Mammary epithelial cell (primary cell): ENCODE measurements at regions of chr6 and their contacts with region 1.

Region 1: DNA sequence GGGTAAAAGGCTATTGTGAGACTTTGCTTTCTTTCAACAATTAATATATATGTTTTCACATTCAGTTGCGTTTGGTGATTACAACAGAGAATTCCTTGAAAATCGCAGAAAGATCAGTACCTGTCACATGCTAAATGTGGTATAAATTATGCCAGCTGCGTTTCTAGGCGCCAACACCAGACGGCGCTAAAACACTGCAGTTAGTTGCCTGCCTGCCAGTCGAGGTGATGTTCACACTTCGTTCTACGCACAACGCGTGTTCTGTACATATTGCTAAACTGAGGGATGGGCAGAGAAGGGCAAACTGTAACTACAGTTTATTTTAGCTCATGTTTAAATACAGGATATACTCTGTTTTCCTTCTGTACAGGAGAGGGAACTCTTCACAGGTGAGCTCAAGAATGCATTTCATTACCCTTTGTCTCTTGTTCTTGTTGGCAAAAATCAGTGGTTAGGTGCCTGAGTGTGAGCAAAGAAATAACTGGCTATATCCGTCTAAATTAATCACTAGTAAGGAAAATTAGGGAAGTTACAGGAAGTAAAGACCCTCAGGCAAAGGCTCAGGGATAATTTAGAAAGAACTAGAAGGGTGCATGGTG is 100.1 kb upstream of the RGS17 start:
- DNase-seq: peak; percentile 44
- H3K4me3 ChIP-seq: no peak overlapping the region
- H3K27ac ChIP-seq: no peak overlapping the region
- H3K4me1 ChIP-seq: no peaks in the 10 kb centered on the region
- H3K27me3 ChIP-seq: no peaks in the 10 kb centered on the region
- CTCF ChIP-seq: peak; percentile 99 to 100

Region 2: DNA sequence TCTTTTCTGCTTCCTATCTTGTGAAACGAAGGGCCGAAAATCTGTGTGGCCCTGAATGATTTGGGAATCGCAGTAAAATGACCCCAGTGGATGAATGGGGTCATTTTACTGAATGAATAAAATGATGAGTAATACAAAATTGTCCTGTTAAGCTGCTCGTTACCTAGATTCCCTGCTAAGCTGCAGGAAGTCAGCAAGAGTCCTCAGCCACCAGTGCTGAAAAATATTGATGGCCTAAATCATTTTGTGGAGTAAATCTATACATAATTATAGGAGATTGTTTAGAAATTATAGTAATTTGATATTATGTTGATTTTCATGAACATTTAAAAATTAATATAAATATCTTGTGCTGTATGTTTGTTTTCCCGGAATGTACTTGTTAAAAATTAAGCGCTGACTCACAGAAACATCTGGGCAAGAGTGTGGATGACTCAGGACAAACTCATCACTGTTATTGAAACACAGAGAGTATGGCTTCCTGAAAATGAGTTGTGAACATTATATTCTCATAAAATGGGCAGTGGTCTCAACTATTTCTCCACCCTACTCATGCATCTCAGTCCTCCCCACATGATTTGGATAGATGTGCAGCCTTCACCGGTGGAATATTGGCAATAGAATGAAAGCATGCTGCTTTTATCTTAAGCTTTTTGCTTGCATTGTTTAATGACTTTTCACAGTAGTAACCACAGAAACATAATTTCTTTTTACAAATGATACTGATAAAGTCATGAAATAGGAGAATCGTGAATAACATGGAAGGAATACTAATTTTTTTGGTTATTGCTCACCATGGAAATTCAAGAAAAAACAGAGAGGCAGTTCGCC is 63.9 kb before region 1 on chr6:
- CTCF ChIA-PET with region 1: no interaction called
- dilution Hi-C with region 1: no loop called
- in situ Hi-C with region 1: no loop called
- intact Hi-C with region 1: no loop called
- DNase-seq: peak; percentile 87
- H3K4me3 ChIP-seq: peak overlapping the region in 1 of 3 experiments; percentile 19
- H3K27ac ChIP-seq: peak overlapping the region; percentile 90
- H3K4me1 ChIP-seq: peaks cover 43% of the 10 kb centered on the region
- H3K27me3 ChIP-seq: no peaks in the 10 kb centered on the region
- CTCF ChIP-seq: no peak

Region 3: GRCh38 chr6:153312641-153313040 is 81.5 kb after region 1 on chr6:
- CTCF ChIA-PET with region 1: no interaction called
- dilution Hi-C with region 1: no loop called
- in situ Hi-C with region 1: no loop called
- intact Hi-C with region 1: loop called (anchors 1 kb)
- DNase-seq: peak; percentile 68
- H3K4me3 ChIP-seq: no peak overlapping the region
- H3K27ac ChIP-seq: no peak overlapping the region
- H3K4me1 ChIP-seq: no peaks in the 10 kb centered on the region
- H3K27me3 ChIP-seq: peaks cover 1% of the 10 kb centered on the region
- CTCF ChIP-seq: peak; percentile 43 to 56

Region 4: GRCh38 chr6:153553627-153554026 is 322.5 kb after region 1 on chr6:
- CTCF ChIA-PET with region 1: no interaction called
- dilution Hi-C with region 1: no loop called
- in situ Hi-C with region 1: no loop called
- intact Hi-C with region 1: loop called (anchors 1 kb)
- DNase-seq: peak; percentile 12
- H3K4me3 ChIP-seq: no peak overlapping the region
- H3K27ac ChIP-seq: no peak overlapping the region
- H3K4me1 ChIP-seq: no peaks in the 10 kb centered on the region
- H3K27me3 ChIP-seq: no peaks in the 10 kb centered on the region
- CTCF ChIP-seq: peak; percentile 26 to 70

Region 5: DNA sequence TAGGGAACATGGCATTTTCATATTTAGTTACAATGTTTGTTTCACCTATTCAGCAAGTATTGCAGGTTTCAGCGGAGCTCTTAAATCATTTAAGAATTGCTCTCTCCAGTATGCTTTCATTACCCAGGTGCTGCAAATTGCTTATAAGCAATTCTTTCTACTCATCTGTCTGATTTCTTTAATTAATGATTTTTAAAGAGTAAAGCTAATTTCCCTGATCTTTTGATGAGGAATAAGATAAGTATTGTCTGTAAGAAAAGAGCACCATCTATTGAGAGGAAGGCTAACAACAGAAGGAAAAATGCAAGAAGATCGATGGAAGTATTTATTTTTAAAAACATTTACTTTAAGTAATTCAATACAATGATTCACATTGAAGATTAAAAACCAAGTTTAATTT is 809.9 kb after region 1 on chr6:
- CTCF ChIA-PET with region 1: no interaction called
- dilution Hi-C with region 1: no loop called
- in situ Hi-C with region 1: no loop called
- intact Hi-C with region 1: loop called (anchors 2 kb)
- DNase-seq: no peak
- H3K4me3 ChIP-seq: no peak overlapping the region
- H3K27ac ChIP-seq: no peak overlapping the region
- H3K4me1 ChIP-seq: no peaks in the 10 kb centered on the region
- H3K27me3 ChIP-seq: no peaks in the 10 kb centered on the region
- CTCF ChIP-seq: peak in 1 of 2 donors; percentile 15